ENCODE measurements at regions of chr7 and their contacts with region 1.

Region 1: DNA sequence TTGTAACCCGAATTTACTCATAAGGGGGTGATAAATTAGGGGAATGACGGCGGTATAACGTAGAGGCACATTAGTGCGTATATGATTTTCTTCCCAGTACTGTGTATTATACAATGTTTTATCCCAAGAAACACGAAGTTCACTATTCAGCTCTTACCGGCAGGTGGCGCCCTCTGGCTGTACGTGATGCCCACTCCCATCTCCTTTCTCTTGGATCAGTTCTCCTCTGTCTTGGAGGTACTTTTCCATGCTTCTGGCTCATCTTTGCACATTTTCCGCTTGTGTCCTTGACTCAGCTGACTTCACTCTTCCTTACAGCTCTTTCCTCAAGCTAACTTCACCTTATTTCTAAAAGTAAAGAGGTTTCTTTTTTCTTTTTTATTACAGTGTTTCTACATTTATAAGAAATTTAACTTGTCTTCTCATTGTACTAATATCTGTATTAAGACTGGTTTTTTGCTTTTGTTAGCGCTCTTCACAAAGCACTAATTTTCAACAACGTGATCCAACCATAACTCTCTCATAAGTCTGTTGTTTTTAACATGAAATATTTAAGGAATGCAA is 21.3 kb downstream of the TMEM176B start:
- DNase-seq: peak; percentile 55
- H3K4me3 Mint-ChIP-seq: no peak overlapping the region
- H3K27ac Mint-ChIP-seq: no peak overlapping the region
- H3K4me1 Mint-ChIP-seq: no peaks in the 10 kb centered on the region
- H3K27me3 Mint-ChIP-seq: peaks cover 27% of the 10 kb centered on the region

Region 2: GRCh38 chr7:150876817-150877526 is 98.2 kb after region 1 on chr7:
- intact Hi-C with region 1: loop called (anchors 2 kb)
- DNase-seq: no peak
- H3K4me3 Mint-ChIP-seq: no peak overlapping the region
- H3K27ac Mint-ChIP-seq: no peak overlapping the region
- H3K4me1 Mint-ChIP-seq: peaks cover 4% of the 10 kb centered on the region
- H3K27me3 Mint-ChIP-seq: peaks cover 55% of the 10 kb centered on the region

Region 3: GRCh38 chr7:151088856-151089699 is 310.3 kb after region 1 on chr7:
- intact Hi-C with region 1: no loop called
- DNase-seq: no peak
- H3K4me3 Mint-ChIP-seq: peak overlapping the region; percentile 70
- H3K27ac Mint-ChIP-seq: no peak overlapping the region
- H3K4me1 Mint-ChIP-seq: peaks cover 18% of the 10 kb centered on the region
- H3K27me3 Mint-ChIP-seq: peaks cover 8% of the 10 kb centered on the region